ENCODE measurements at regions of chr6 and their contacts with region 1.

Region 1: GRCh38 chr6:112253841-112254816 is at the start of gene LAMA4:
- DNase-seq: no peak
- ATAC-seq: peak; percentile 84
- H3K4me3 ChIP-seq: peak within 1 kb of the TSS; percentile 60 to 91
- H3K27ac ChIP-seq: peak within 1 kb of the TSS; percentile 53
- H3K4me1 ChIP-seq: peaks cover 11% of the 10 kb centered on the region
- H3K27me3 ChIP-seq: peaks cover 3% of the 10 kb centered on the region; the same call in 1 of the 2 replicates
- CTCF ChIP-seq: no peak
- total RNA-seq, gene LAMA4: 11.9 TPM

Region 2: DNA sequence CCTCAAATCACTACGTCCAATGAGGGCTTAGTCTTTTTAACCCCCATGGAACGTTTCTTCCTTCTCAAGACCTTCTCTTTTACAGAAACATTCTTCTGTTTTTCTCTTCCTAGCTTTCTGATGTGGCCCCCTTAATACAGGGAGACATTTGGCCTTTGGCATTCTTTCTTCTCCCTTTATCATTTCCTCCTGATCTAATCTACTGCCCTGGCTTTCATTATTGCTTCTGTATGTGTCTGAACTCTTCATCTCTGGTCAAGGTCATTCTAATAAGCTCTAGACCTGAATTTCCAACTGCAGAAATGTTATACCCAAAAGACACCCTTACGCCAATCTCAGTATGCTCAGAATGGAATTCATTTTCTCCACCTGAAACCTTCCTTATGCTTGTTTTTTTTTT is 18.7 kb after region 1 on chr6:
- CTCF ChIA-PET with region 1: interaction called, 13 read pairs
- POLR2A ChIA-PET with region 1: no interaction called
- in situ Hi-C with region 1: no loop called
- intact Hi-C with region 1: no loop called
- DNase-seq: no peak
- ATAC-seq: no peak
- H3K4me3 ChIP-seq: no peak overlapping the region
- H3K27ac ChIP-seq: no peak overlapping the region
- H3K4me1 ChIP-seq: no peaks in the 10 kb centered on the region
- H3K27me3 ChIP-seq: no peaks in the 10 kb centered on the region
- CTCF ChIP-seq: no peak

Region 3: GRCh38 chr6:112317041-112317860 is 63.1 kb after region 1 on chr6:
- CTCF ChIA-PET with region 1: no interaction called
- POLR2A ChIA-PET with region 1: interaction called, 14 read pairs
- in situ Hi-C with region 1: no loop called
- intact Hi-C with region 1: no loop called
- DNase-seq: no peak
- ATAC-seq: no peak
- H3K4me3 ChIP-seq: no peak overlapping the region
- H3K27ac ChIP-seq: no peak overlapping the region
- H3K4me1 ChIP-seq: 0 out of 2 replicates have a peak, but pooled peaks cover 2% of the 10 kb centered on the region
- H3K27me3 ChIP-seq: no peaks in the 10 kb centered on the region
- CTCF ChIP-seq: no peak

Region 4: GRCh38 chr6:113122060-113122459 is 867.9 kb after region 1 on chr6:
- CTCF ChIA-PET with region 1: no interaction called
- POLR2A ChIA-PET with region 1: no interaction called
- in situ Hi-C with region 1: no loop called
- intact Hi-C with region 1: no loop called
- DNase-seq: peak; percentile 50
- ATAC-seq: peak; percentile 73; the same call in 1 of the 2 replicates
- H3K4me3 ChIP-seq: no peak overlapping the region
- H3K27ac ChIP-seq: peak overlapping the region; percentile 45; the same call in 1 of the 2 replicates
- H3K4me1 ChIP-seq: 0 out of 2 replicates have a peak, but pooled peaks cover 2% of the 10 kb centered on the region
- H3K27me3 ChIP-seq: no peaks in the 10 kb centered on the region
- CTCF ChIP-seq: peak; percentile 23; the same call in 1 of the 2 replicates